Aorta (tissue), 5 donors: ENCODE measurements at regions of chr11 and their contacts with region 1.

Region 1: GRCh38 chr11:2314525-2315394 is 12.9 kb downstream of the TSPAN32 start:
- DNase-seq: peak; percentile 93 to 95
- ATAC-seq: peak; percentile 87
- H3K4me3 ChIP-seq: no peak overlapping the region
- H3K27ac ChIP-seq: peak overlapping the region; percentile 59 to 67
- H3K4me1 ChIP-seq: no peaks in the 10 kb centered on the region
- H3K27me3 ChIP-seq: no peaks in the 10 kb centered on the region

Region 2: GRCh38 chr11:2377511-2378443 is 63.0 kb after region 1 on chr11:
- intact Hi-C with region 1: loop called (anchors 2 to 5 kb)
- DNase-seq: peak; percentile 83 to 91
- ATAC-seq: peak; percentile 78
- H3K4me3 ChIP-seq: peak overlapping the region; percentile 59 to 97
- H3K27ac ChIP-seq: peak overlapping the region; percentile 87 to 92
- H3K4me1 ChIP-seq: no peaks in the 10 kb centered on the region
- H3K27me3 ChIP-seq: no peaks in the 10 kb centered on the region